Activated CD4-positive, alpha-beta memory T cell treated with anti-CD3 and anti-CD28 coated beads, Interleukin-2, amount 10 ng/mL, durations not matched to agents 7 days and 5 days (primary cell): ENCODE measurements at regions of chr21 and their contacts with region 1.

Region 1: GRCh38 chr21:41425954-41426675 is at the start of gene MX1:
- DNase-seq: peak; percentile 97
- H3K4me3 Mint-ChIP-seq: peak within 1 kb of the TSS; percentile 97
- H3K27ac Mint-ChIP-seq: peak within 1 kb of the TSS; percentile 100
- H3K4me1 Mint-ChIP-seq: peaks cover 85% of the 10 kb centered on the region
- H3K27me3 Mint-ChIP-seq: no peaks in the 10 kb centered on the region
- total RNA-seq, gene MX1: 682 to 702 TPM

Region 2: DNA sequence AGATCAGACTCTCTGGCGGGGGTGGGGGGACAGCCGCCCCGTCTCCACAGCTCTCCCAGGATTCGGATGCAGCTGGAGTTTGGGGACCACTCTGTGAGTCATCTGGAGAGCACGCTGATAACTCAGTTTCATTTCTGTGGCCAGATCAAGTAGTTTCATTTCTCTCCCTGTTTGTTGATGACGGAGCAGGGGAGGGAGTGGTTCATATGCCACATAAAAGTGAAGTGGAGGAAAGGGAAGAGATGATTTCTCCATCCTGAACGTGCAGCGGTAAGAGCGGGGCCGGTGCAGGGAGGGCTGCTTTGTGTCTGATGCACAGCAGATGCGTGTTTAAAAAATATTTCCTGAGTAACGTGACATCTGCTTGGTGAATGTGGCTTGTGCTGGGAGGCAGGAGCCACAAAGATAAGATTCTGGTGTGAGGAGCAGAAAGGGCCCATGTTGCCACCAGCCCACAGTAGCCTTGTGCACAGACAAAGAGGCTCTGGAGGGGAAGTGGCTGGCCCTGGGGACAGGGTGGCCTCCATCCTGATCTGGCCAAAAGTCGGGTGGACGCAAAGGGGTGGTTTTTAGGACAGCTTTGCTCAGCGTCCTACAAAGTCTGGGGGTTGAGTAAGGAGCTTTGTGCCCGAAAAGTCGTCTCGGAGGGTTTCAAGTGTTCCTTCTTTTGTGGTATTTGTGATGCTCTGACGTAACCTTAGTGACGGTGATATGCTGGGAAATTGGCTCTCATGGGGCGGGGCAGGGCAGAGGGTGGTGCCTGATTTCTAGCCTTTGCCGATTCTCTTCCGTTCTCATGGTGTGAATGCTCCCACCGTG is 64.1 kb before region 1 on chr21 and contains the start of gene MX2:
- CTCF ChIA-PET with region 1: interaction called, 10 read pairs
- POLR2A ChIA-PET with region 1: interaction called, 116 read pairs
- DNase-seq: peak; percentile 88
- H3K4me3 Mint-ChIP-seq: peak within 1 kb of the TSS; percentile 94
- H3K27ac Mint-ChIP-seq: peak within 1 kb of the TSS; percentile 97
- H3K4me1 Mint-ChIP-seq: peaks cover 56% of the 10 kb centered on the region
- H3K27me3 Mint-ChIP-seq: peaks cover 5% of the 10 kb centered on the region
- total RNA-seq, gene MX2: 167 to 171 TPM

Region 3: GRCh38 chr21:41369105-41369919 is 56.8 kb before region 1 on chr21:
- CTCF ChIA-PET with region 1: interaction called, 3 read pairs
- POLR2A ChIA-PET with region 1: interaction called, 42 read pairs
- DNase-seq: peak; percentile 29
- H3K4me3 Mint-ChIP-seq: peak overlapping the region; percentile 70
- H3K27ac Mint-ChIP-seq: peak overlapping the region; percentile 77
- H3K4me1 Mint-ChIP-seq: peaks cover 72% of the 10 kb centered on the region
- H3K27me3 Mint-ChIP-seq: no peaks in the 10 kb centered on the region

Region 4: GRCh38 chr21:41411449-41412089 is 14.5 kb before region 1 on chr21:
- CTCF ChIA-PET with region 1: interaction called, 9 read pairs
- POLR2A ChIA-PET with region 1: interaction called, 14 read pairs
- DNase-seq: peak; percentile 34
- H3K4me3 Mint-ChIP-seq: no peak overlapping the region
- H3K27ac Mint-ChIP-seq: no peak overlapping the region
- H3K4me1 Mint-ChIP-seq: peaks cover 9% of the 10 kb centered on the region
- H3K27me3 Mint-ChIP-seq: peaks cover 47% of the 10 kb centered on the region